ENCODE measurements at regions of chr6 and their contacts with region 1.

Region 1: DNA sequence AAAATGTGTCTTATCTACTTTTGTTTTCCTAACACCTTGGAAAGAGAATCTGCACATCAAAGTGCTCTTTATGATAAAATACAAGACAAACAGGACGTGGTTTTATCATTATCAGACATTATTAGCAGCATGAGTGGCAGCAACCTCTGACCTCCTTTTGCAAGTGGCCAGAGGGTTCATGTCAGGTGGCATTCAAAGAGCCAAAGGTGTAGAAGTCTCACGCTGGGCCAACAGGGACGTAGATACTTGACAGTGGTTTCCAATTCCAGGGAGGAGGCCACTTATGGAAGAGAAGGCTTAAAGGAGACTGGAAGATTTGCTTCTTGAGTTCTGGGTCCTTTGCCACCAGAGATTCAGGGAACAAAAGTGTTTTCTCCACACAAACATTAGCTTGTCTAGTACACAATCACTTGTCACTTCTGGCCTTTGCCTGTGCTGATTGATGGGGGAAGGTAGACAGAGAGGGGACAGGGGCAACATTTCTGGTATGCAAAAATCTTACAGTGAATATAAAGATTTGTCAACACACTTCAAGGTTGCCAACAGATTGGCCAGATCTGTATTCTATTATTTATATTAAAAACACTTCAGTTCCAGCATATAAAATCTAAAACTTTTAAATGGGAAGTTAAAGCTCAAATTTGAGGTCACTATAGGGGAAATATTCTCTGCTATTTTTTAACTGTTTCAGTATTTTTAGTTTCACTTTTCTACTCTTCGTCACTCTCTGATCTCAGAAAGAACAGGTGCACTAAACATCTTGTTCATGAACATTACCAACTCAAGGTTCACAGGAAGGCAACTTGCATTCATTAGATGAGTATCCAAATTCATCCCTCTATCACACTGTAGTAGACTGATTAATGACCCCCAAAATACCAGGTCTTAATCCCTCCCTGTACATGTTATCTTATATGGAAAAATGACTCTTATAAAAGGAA is 52.1 kb upstream of the FBXO30 start:
- DNase-seq: no peak
- ATAC-seq: peak; percentile 57
- H3K4me3 ChIP-seq: peak overlapping the region; percentile 38
- H3K27ac ChIP-seq: peak overlapping the region; percentile 77
- H3K4me1 ChIP-seq: peaks cover 35% of the 10 kb centered on the region
- H3K27me3 ChIP-seq: no peaks in the 10 kb centered on the region
- CTCF ChIP-seq: no peak
- EP300 ChIP-seq: no peak
- POLR2A ChIP-seq: no peak
- RAD21 ChIP-seq: no peak

Region 2: GRCh38 chr6:145734486-145735355 is 132.0 kb before region 1 on chr6:
- CTCF ChIA-PET with region 1: interaction called, 3 read pairs
- POLR2A ChIA-PET with region 1: interaction called, 7 read pairs
- RAD21 ChIA-PET with region 1: interaction called, 7 read pairs
- SMC1A ChIA-PET with region 1: interaction called, 6 read pairs
- in situ Hi-C with region 1: no loop called
- intact Hi-C with region 1: loop called (anchors 2 kb)
- DNase-seq: no peak
- ATAC-seq: peak; percentile 79
- H3K4me3 ChIP-seq: peak overlapping the region; percentile 95
- H3K27ac ChIP-seq: peak overlapping the region; percentile 83
- H3K4me1 ChIP-seq: no peaks in the 10 kb centered on the region; the same call in 1 of the 2 replicates
- H3K27me3 ChIP-seq: no peaks in the 10 kb centered on the region
- CTCF ChIP-seq: no peak
- EP300 ChIP-seq: 0 out of 4 replicates have a peak, but pooled peaks of 1 of the 2 experiments have one; percentile 20
- POLR2A ChIP-seq: peak; percentile 77
- RAD21 ChIP-seq: no peak